Activated T-helper 1 cell treated with anti-CD3 and anti-CD28 coated beads, Interleukin-12 subunit alpha, Interleukin-12 subunit beta, Interleukin-2, Interleukin-4 antibody, amounts not matched to agents 30 ng/mL and 10 ng/mL and 1 ng/mL, durations not matched to agents 14 hours and 24 hours and 36 hours (primary cell): ENCODE measurements at regions of chr15 and their contacts with region 1.

Region 1: DNA sequence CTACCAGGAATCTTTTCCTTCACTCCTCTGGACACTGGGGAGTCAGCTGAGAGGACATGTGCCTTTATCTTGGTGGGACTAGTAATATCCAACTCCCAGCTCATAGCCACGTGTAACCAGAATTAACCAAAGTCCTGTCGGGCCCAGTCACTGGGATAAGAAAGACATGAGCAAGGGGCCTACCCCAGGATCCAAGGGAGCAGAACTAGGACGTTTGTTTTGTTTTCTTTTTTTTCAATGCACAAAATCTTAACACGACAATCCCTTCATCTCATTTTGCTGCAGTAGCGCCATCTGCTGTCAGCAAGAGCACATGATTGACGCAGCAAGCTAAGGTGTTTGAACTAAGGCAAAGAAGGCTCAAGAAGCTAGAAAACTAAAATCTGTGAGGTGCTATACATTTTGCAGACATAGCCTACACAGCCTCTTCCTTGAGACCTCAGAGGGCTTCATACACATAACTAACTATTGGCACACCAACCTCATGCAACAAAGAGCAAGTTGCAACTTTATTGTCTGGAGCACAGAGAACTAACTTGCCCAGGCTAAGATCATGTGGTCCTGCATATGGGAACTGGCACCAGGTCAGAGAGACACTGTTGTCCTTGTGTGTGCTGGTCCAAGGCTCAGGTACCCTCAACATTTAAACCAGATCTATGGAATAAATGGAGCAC is 43.6 kb downstream of the RLBP1 start:
- DNase-seq: peak; percentile 51
- H3K4me3 Mint-ChIP-seq: no peak overlapping the region
- H3K27ac Mint-ChIP-seq: peak overlapping the region; percentile 8
- H3K4me1 Mint-ChIP-seq: peaks cover 33% of the 10 kb centered on the region
- H3K27me3 Mint-ChIP-seq: no peaks in the 10 kb centered on the region

Region 2: DNA sequence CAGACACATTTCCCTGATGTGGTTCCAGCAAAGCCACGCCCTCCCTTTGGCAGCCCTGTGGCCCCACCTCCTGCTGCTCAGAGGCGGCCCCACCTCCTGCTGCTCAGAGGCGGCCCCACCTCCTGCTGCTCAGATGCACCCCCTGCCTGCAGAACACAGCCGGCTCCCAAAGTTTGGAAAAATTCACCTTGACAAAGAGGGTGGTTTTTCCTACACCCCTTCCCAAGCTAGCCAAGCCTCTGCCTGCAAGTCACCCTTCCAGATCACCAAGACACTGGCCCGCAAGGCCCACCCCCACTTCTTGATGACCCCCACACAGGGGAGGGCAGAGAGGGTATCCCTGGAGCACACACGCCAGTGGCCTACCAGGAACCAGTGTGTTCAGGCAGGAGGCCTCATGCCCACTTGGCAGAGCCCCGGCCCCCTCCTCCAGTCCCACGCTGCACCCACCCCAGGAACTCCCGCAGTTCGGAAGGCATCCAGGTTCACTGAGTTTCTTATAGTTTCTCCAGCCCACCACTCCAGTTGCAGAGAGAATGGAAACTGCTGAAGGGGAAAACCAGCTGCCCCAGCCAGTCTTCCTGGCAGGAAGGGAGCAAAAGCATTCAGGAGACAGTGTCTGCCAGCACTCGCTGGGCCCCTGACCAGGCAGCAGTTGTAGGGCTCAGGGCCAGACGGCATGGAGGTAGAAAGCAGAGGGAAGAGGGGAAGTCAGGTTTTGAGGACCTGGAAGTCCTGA is 280.1 kb before region 1 on chr15:
- intact Hi-C with region 1: loop called (anchors 2 kb)
- DNase-seq: peak; percentile 78
- H3K4me3 Mint-ChIP-seq: no peak overlapping the region
- H3K27ac Mint-ChIP-seq: no peak overlapping the region
- H3K4me1 Mint-ChIP-seq: peaks cover 35% of the 10 kb centered on the region
- H3K27me3 Mint-ChIP-seq: no peaks in the 10 kb centered on the region

Region 3: GRCh38 chr15:89057504-89058133 is 120.2 kb before region 1 on chr15:
- intact Hi-C with region 1: loop called (anchors 1 kb)
- DNase-seq: peak; percentile 68
- H3K4me3 Mint-ChIP-seq: no peak overlapping the region
- H3K27ac Mint-ChIP-seq: no peak overlapping the region
- H3K4me1 Mint-ChIP-seq: peaks cover 11% of the 10 kb centered on the region
- H3K27me3 Mint-ChIP-seq: peaks cover 12% of the 10 kb centered on the region

Region 4: GRCh38 chr15:89087830-89088604 is 89.8 kb before region 1 on chr15 and contains the start of gene ABHD2:
- intact Hi-C with region 1: loop called (anchors 1 kb)
- DNase-seq: peak; percentile 98
- H3K4me3 Mint-ChIP-seq: no peak within 1 kb of the TSS
- H3K27ac Mint-ChIP-seq: no peak within 1 kb of the TSS
- H3K4me1 Mint-ChIP-seq: peaks cover 33% of the 10 kb centered on the region
- H3K27me3 Mint-ChIP-seq: no peaks in the 10 kb centered on the region
- total RNA-seq, gene ABHD2: 66.5 and 66.7 TPM in 2 replicates

Region 5: DNA sequence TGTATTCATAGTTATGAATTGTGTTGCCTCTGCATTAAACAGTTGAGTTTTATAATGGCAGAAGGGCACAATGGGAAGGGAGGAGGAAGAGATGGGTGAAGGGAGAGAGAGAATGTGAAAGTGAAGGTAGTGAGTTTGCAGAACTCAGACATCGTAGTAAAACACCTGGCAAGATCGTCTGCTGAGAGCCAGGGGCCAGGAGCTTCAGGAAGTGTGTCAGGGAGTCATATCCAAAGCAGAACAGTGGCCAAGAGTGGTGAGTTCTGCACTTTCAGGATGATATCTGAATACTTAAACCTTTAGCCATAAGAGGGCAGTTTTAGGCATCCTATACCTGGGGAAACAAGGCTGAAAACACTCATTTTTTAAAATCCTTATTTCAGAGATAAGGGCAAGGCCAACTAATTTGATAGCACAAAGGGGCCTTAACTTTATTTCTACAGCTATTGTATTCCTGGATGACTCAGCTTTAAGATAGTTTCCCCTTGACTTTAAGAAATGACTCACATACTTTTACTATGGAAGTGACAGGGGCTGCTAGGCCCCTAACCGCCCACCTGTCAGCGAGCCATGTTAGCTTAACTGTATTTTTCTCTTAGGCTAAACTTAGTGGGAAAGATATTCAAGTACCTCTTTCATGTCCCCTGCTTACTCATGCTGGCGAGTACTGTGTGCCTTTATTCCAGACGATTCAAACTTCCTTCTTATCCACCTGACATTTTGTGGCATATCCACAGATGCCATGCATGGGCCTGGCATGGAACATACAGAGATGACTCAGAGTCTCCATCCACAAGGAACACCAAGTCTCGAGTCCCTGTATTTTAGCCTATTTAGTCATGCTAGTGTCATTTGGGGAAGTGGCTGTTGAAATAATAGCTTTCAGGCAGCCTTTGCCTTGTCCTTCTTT is 10.2 kb before region 1 on chr15:
- intact Hi-C with region 1: loop called (anchors 1 kb)
- DNase-seq: no peak
- H3K4me3 Mint-ChIP-seq: peak overlapping the region; percentile 65
- H3K27ac Mint-ChIP-seq: peak overlapping the region; percentile 90
- H3K4me1 Mint-ChIP-seq: peaks cover 31% of the 10 kb centered on the region
- H3K27me3 Mint-ChIP-seq: no peaks in the 10 kb centered on the region

Region 6: DNA sequence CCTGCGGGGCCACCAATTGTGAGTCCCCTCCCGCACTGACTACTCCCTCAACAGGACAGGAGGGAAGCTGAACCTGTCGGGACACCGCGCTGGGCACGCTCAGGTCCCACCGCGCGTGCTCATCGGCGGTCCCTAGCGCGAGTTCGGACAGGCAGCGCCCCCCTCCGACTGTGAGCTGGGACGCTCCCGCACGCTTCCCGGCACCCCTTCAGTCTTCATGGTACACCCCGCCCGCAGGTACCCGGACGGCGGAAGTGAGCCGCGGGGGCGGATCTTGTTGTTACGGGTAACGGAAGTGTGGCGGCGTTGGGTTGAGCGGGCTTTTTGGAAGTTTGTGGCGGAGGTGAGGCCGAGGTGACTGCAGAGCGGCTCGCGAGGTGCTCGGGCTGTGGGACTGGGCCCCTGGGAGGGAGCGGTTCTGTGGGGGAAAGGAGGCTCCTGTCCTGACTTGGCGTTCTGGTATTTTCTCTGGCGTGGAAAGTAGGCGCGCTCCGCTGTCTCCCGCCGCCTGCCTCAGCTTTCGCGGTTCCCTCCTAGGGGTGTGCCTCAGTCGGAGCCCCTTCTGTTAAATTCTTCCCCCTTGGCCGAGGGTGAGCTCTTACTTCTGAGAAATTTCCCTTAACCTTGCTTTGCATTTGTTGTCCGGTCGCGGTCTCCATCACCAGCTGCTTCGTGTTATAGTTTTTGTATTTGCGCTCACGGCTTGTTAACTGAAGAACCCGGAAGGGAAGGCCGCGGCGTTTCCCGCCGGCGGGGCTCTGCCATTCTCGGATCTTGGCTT is 66.1 kb after region 1 on chr15 and contains the start of gene FANCI:
- intact Hi-C with region 1: loop called (anchors 1 kb)
- DNase-seq: peak; percentile 95
- H3K4me3 Mint-ChIP-seq: peak within 1 kb of the TSS; percentile 96
- H3K27ac Mint-ChIP-seq: peak within 1 kb of the TSS; percentile 90
- H3K4me1 Mint-ChIP-seq: peaks cover 53% of the 10 kb centered on the region
- H3K27me3 Mint-ChIP-seq: peaks cover 9% of the 10 kb centered on the region
- total RNA-seq, gene FANCI: 167 and 172 TPM in 2 replicates